HEK293 (cell line): ENCODE measurements at regions of chr17 and their contacts with region 1.

Region 1: GRCh38 chr17:35969558-35970380 is 11.5 kb downstream of the CCL16 start:
- H3K4me3 ChIP-seq: no peak overlapping the region
- H3K27ac ChIP-seq: no peak overlapping the region
- H3K4me1 ChIP-seq: no peaks in the 10 kb centered on the region
- CTCF ChIP-seq: peak; percentile 69

Region 2: DNA sequence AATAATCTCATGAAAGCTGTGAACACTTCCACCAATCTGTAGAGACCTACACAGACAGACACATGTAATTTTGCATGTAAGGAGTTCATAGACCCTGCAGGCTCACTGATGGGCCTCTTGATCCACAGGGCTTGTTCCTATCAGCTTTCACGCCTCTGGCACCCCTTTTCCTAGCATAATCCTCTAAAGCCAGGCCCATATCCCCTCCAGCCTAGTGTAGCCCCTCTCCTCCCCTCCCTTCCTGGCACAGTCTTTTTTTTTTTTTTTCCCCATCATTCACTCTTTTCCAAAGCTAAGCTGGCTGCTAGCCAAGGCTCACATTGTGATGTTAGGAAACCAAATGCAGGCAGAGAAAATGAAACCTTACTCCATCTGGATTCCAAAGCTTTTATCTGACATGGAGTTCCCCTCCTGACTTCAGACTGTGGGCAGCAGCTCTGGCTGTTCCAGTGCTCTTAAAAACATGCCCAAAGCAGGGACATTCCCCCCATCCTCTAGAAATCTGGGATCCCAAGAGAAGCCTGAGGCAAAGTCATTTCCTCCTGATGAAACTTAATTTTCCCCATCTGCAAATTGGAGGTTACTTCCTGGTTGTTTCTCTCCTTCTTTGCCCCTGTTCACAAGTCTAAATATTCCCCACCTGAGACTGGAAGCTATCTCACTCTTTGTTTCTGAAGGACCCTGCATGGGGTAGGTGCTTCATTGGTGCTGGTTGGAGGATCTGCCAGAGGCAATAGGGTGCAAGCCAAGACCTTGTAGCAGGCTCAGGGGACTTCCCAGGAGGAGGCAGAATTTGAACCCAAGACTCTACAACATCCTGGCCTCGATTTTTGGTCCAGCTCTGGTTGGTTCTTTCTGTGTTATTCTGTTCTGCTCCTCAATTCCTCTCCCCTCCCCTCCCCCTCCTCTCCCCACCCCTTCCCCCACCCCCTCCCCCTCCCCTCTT is 79.7 kb before region 1 on chr17:
- CTCF ChIA-PET with region 1: no interaction called
- POLR2A ChIA-PET with region 1: no interaction called
- H3K4me3 ChIP-seq: no peak overlapping the region
- H3K27ac ChIP-seq: peak overlapping the region; percentile 46; the same call in 1 of the 2 replicates
- H3K4me1 ChIP-seq: peaks cover 13% of the 10 kb centered on the region
- CTCF ChIP-seq: no peak

Region 3: GRCh38 chr17:35953720-35954119 is 16.0 kb before region 1 on chr17:
- CTCF ChIA-PET with region 1: interaction called, 29 read pairs
- POLR2A ChIA-PET with region 1: no interaction called
- H3K4me3 ChIP-seq: no peak overlapping the region
- H3K27ac ChIP-seq: no peak overlapping the region
- H3K4me1 ChIP-seq: no peaks in the 10 kb centered on the region
- CTCF ChIP-seq: no peak

Region 4: GRCh38 chr17:36072431-36073121 is 102.8 kb after region 1 on chr17:
- CTCF ChIA-PET with region 1: interaction called, 35 read pairs
- POLR2A ChIA-PET with region 1: no interaction called
- H3K4me3 ChIP-seq: no peak overlapping the region
- H3K27ac ChIP-seq: no peak overlapping the region
- H3K4me1 ChIP-seq: no peaks in the 10 kb centered on the region
- CTCF ChIP-seq: peak; percentile 53; the same call in 1 of the 2 replicates

Region 5: DNA sequence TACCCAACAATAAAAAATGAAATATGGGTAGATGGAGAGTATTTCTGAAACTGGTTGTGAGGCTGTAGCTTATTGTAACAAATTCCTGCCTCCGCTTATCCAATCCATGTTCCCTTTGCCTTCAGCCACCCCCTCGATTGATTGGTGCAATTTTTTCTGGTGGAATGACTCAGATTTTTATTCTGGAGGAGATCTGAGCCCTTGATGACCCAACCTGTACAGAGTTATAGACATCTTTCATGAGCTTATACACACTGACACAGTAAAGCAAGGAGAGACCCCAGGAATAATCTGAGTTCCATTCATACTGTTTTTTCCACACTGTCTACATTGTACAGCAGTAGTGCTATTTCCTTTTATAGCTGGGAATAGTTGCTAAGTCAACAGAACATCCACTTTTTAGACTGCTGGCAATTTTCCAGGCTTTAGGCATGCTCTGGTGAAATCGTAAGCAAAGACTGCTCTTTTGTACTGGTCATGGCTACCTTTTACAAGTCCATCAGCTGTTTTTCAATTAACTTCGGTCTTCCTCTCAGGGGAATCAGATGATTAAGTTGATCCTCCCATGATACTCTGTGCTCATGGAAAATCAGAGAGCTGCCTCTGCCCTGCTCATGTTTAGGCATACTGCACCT is 163.9 kb after region 1 on chr17:
- CTCF ChIA-PET with region 1: interaction called, 10 read pairs
- POLR2A ChIA-PET with region 1: no interaction called
- H3K4me3 ChIP-seq: no peak overlapping the region
- H3K27ac ChIP-seq: no peak overlapping the region
- H3K4me1 ChIP-seq: peaks cover 9% of the 10 kb centered on the region
- CTCF ChIP-seq: no peak

Region 6: DNA sequence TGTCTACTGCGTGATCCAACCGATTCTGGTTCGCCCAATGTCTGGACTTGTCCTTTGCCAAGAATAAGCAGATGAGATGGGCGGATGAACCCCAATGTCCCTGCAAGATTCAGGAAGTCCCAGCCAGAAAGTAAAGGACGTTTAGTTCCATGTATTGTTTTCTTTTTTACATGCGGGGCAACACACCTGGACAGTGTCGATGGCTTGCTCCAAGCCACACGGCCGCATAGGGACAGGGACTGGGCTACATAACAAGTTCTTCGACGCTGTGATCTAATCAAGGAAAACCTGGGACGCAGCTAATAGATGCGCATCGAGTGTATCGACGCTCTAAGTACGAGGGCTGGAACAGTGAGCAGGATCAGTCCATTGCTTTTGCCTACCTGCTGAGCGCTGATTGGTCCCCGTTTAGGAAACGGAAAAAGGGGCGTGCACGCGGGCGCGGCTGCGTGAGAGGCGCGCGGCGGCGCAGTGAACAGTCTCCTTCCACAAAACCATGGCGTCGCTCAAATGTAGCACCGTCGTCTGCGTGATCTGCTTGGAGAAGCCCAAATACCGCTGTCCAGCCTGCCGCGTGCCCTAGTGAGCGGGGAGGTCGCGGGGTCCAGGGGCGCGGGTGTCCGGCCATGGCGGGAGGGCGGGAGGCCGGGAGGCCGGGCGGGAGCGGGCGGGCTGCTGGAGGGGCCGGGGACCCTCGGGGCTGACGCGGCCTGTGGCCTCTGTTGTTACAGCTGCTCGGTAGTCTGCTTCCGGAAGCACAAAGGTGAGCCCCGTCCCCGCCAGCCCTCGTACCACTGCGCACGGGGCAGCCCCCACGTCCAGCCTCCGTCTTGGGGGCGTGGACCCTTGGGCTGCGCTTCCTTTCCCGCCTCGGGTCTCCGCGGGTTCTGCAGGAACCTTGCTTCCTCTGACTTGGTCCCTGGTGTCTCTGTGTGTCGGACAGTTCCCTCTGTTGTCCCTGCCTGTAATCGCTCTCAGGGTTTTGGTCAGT is 516.7 kb after region 1 on chr17 and contains the start of gene ZNHIT3:
- CTCF ChIA-PET with region 1: interaction called, 27 read pairs
- POLR2A ChIA-PET with region 1: no interaction called
- H3K4me3 ChIP-seq: peak within 1 kb of the TSS; percentile 94
- H3K27ac ChIP-seq: peak within 1 kb of the TSS; percentile 64
- H3K4me1 ChIP-seq: no peaks in the 10 kb centered on the region
- CTCF ChIP-seq: no peak